Mammary epithelial cell (primary cell): ENCODE measurements at regions of chr5 and their contacts with region 1.

Region 1: DNA sequence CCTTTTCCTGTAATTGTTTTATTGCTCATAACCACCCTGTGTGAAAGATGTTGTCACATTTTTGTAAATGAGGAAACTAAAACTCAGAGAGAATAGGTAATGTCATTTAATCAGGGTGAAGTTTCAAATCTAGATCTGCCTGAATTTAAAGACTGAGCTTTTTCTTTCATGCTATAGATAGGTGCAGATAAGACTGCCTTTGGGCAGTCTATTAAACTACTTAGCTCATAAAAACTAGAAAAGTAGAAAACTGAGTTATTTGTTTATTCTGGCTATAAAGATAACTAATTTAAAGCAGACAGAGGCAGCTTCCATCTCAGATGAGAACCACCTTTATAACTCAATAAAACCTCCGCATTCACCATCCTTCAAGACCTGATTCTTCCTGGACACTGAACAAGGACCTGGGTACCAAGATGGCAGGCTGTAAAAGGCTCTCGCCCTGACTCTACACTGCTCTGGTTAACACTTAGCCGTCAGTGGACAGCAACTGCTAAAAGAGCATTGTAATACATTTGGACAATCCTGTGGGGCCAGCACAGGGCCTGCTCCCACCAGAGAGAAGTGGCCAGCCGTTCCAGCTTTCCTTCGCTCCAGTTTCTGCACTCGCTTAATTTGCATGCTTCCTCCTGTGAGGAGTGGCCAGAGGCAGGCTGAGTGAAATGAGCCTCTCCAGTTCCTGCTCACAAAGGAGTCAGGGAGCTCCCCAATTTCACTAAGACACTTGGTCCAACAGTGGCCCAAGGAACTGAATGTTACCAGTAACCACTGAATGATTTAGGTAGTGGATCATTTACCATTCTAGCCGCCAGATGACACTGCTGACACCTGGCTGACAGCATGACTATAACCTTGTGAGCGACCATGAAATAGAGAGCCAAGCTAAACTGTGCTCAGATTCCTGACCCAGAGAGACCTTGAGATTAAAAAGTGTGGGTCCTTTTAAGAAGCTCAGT is 566.4 kb downstream of the EFNA5 start:
- DNase-seq: no peak
- H3K4me3 ChIP-seq: no peak overlapping the region
- H3K27ac ChIP-seq: no peak overlapping the region
- H3K4me1 ChIP-seq: no peaks in the 10 kb centered on the region
- H3K27me3 ChIP-seq: no peaks in the 10 kb centered on the region
- CTCF ChIP-seq: peak in 1 of 2 donors; percentile 29

Region 2: GRCh38 chr5:106508894-106509293 is 595.4 kb before region 1 on chr5:
- CTCF ChIA-PET with region 1: no interaction called
- dilution Hi-C with region 1: no loop called
- in situ Hi-C with region 1: no loop called
- intact Hi-C with region 1: no loop called
- DNase-seq: no peak
- H3K4me3 ChIP-seq: no peak overlapping the region
- H3K27ac ChIP-seq: no peak overlapping the region
- H3K4me1 ChIP-seq: no peaks in the 10 kb centered on the region
- H3K27me3 ChIP-seq: no peaks in the 10 kb centered on the region
- CTCF ChIP-seq: no peak

Region 3: DNA sequence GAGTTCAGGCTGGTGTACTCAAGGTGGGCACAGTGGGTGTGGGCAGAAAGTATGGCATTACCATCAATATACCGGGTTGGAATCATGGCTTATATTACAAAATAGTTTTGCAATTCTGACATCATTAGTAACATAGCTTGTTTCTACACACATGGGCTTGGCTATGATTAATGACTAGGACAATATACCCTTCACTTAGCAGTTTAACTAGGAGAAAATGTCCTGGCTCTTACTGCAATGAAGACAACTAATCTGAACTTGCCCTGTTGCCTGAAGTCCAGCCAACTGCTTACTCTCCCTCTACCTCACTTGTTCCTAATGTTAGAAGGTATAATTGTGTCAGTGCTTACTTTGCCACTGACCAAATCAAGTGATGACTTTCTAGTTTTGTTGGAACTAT is 46.1 kb before region 1 on chr5:
- CTCF ChIA-PET with region 1: no interaction called
- dilution Hi-C with region 1: no loop called
- in situ Hi-C with region 1: no loop called
- intact Hi-C with region 1: no loop called
- DNase-seq: peak; percentile 74
- H3K4me3 ChIP-seq: no peak overlapping the region
- H3K27ac ChIP-seq: no peak overlapping the region
- H3K4me1 ChIP-seq: no peaks in the 10 kb centered on the region
- H3K27me3 ChIP-seq: no peaks in the 10 kb centered on the region
- CTCF ChIP-seq: no peak

Region 4: DNA sequence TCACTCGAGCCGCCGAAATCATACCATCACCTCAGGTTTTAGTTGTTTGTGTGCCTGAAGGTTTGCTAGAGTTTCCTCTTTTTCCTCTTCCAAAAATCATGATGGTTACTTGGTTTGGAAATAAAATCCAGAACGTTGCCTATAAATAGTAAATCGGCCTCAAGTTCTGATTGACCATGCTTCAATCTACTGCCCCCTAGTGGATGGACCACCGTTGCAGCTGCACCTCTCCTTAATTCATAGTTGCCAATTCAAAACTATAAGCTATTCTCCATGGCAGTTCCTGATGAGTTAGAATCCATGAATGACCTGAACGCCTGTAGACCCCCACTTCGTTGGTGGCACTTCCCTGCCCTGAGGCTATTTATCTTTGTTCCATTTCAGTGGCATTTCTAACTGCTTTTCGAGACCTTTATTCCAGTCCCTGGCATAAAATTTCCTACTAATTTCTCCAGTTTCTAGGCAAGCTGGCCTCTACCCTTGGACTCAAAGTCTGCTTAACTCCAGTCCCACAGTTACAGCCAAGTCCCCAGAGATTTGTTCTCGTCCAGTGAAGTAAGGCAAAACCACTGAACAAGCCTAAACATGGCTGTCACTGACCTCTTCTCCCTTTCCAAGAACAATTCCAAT is 143.9 kb after region 1 on chr5:
- CTCF ChIA-PET with region 1: no interaction called
- dilution Hi-C with region 1: no loop called
- in situ Hi-C with region 1: no loop called
- intact Hi-C with region 1: loop called (anchors 1 kb)
- DNase-seq: peak; percentile 30
- H3K4me3 ChIP-seq: no peak overlapping the region
- H3K27ac ChIP-seq: no peak overlapping the region
- H3K4me1 ChIP-seq: no peaks in the 10 kb centered on the region
- H3K27me3 ChIP-seq: no peaks in the 10 kb centered on the region
- CTCF ChIP-seq: peak; percentile 77 to 81

Region 5: GRCh38 chr5:107359033-107359915 is 255.0 kb after region 1 on chr5:
- CTCF ChIA-PET with region 1: no interaction called
- dilution Hi-C with region 1: no loop called
- in situ Hi-C with region 1: no loop called
- intact Hi-C with region 1: loop called (anchors 10 kb)
- DNase-seq: peak; percentile 19
- H3K4me3 ChIP-seq: no peak overlapping the region
- H3K27ac ChIP-seq: no peak overlapping the region
- H3K4me1 ChIP-seq: peaks cover 9% of the 10 kb centered on the region
- H3K27me3 ChIP-seq: no peaks in the 10 kb centered on the region
- CTCF ChIP-seq: no peak

Region 6: GRCh38 chr5:107373549-107374263 is 269.4 kb after region 1 on chr5:
- CTCF ChIA-PET with region 1: no interaction called
- dilution Hi-C with region 1: no loop called
- in situ Hi-C with region 1: no loop called
- intact Hi-C with region 1: no loop called
- DNase-seq: no peak
- H3K4me3 ChIP-seq: no peak overlapping the region
- H3K27ac ChIP-seq: no peak overlapping the region
- H3K4me1 ChIP-seq: peaks cover 24% of the 10 kb centered on the region
- H3K27me3 ChIP-seq: no peaks in the 10 kb centered on the region
- CTCF ChIP-seq: no peak